Breast epithelium (tissue), 4 donors: ENCODE measurements at regions of chr3 and their contacts with region 1.

Region 1: DNA sequence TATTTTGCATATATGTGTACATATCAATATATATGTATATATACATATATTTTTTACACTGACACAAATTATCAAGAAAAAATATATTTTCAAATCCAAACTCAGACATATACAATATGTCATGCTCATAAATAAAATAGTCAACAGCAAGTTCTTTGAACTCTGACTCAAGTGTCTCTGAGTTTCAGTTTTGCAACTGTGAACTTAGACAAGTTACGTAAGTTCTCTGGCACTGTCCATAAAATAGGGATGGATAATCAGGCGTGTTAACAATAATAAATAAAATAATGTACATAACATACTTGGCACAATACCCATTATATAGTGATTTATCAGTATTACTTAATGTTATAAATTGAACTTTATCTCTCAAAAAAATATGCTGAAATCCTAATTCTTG is 12.1 kb upstream of the XRN1 start:
- DNase-seq: no peak
- H3K4me3 ChIP-seq: no peak overlapping the region
- H3K27ac ChIP-seq: no peak overlapping the region
- H3K4me1 ChIP-seq: no peaks in the 10 kb centered on the region
- H3K27me3 ChIP-seq: no peaks in the 10 kb centered on the region
- CTCF ChIP-seq: no peak
- POLR2A ChIP-seq: no peak

Region 2: DNA sequence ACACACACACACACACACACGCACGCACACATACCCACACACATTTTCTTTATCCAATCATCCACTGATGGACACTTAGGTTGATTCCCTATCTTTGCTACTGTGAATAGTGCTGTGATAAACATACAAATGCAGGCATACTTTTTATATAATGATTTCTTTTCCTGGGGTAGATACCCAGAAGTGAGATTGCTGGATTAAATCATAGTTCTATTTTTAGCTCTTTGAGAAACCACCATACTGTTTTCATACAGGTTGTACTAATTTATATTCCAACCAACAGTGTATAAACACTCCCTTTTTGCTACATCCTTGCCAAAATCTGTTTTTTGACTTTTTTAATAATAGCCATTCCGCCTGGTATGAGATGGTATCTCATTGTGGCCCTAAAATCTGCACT is 140.0 kb before region 1 on chr3:
- intact Hi-C with region 1: loop called (anchors 5 kb)
- DNase-seq: no peak
- H3K4me3 ChIP-seq: no peak overlapping the region
- H3K27ac ChIP-seq: no peak overlapping the region
- H3K4me1 ChIP-seq: no peaks in the 10 kb centered on the region
- H3K27me3 ChIP-seq: no peaks in the 10 kb centered on the region
- CTCF ChIP-seq: no peak
- POLR2A ChIP-seq: no peak

Region 3: DNA sequence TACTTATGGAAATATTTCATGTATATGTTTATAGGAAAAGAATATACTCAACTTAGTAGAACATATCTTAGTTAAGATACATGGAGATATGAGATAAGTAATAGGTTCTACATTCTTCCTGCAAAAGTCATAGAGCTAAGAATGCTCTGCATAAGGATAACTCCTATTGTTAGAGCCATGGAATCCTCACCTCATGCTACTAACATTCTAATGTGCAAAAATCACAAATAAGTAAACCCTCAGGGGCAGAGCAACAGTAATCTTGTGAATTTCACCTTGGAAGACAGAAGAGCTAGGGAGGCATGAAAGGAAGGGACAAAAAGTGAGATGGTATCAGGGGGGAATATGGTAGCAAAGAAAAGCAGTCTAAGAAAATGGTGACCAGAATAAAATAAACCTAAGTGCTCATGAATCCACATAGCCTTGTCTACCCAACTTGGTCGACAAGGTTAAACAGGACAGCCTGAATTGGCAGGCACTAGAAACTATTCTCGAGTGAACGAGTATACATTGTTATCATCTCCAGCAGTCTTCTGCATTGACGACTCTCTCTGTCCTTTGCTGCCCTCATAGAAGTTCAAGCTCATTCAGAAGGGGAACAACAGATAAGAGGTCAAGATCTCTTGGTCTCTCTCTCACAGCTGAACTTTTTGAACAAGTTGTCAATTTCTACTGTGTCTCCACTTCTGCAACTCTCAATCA is 64.9 kb before region 1 on chr3:
- intact Hi-C with region 1: no loop called
- DNase-seq: no peak
- H3K4me3 ChIP-seq: no peak overlapping the region
- H3K27ac ChIP-seq: no peak overlapping the region
- H3K4me1 ChIP-seq: no peaks in the 10 kb centered on the region
- H3K27me3 ChIP-seq: no peaks in the 10 kb centered on the region
- CTCF ChIP-seq: no peak
- POLR2A ChIP-seq: no peak